MCF 10A (cell line): ENCODE measurements at regions of chrX and their contacts with region 1.

Region 1: DNA sequence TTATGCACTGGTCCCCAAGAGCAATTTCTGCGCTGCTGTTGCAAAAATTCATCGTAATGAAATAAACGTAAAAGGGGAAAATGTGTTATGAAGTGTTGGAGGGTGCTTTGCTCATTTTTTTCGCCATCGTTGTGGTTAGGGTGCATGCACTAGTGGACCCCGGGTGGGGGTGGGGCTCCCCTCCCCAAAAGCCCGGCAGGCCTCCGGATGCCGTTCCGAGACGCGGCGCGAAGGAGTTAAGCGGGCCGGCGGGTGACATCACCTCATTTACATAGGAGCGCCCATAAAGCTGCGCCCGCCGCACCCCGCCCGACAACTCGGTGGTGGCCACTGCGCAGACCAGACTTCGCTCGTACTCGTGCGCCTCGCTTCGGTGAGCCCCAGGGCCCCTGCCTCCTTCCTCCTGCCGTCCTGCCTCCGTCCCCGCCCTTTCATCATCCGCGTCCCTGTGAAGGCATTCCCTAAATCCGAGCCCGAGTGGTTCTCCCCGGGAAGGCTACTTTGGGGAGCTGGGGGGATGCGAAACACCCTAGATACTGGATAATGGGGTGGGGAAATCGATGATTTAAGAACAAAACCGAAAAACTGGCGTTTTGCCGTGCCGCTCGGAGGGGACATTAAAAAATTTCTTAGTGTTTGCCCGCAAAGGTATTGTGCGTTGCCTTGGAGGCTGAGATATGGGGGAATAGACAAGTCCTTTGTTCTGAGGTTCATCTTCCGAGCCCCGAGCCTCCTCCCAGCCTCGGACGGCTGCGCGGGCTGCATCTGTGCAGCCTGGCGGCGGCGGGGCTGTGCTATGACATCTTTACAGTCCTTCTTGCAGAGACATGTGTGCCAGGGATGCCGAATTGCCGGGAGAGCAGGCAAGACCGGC is at the start of gene TMSB4X:
- DNase-seq: peak; percentile 75
- H3K4me3 Mint-ChIP-seq: peak within 1 kb of the TSS; percentile 88
- H3K27ac Mint-ChIP-seq: peak within 1 kb of the TSS; percentile 84
- H3K4me1 Mint-ChIP-seq: peaks cover 8% of the 10 kb centered on the region
- H3K27me3 Mint-ChIP-seq: peaks cover 18% of the 10 kb centered on the region
- CTCF ChIP-seq: no peak
- total RNA-seq, gene TMSB4X: 801 and 901 TPM in 2 replicates

Region 2: DNA sequence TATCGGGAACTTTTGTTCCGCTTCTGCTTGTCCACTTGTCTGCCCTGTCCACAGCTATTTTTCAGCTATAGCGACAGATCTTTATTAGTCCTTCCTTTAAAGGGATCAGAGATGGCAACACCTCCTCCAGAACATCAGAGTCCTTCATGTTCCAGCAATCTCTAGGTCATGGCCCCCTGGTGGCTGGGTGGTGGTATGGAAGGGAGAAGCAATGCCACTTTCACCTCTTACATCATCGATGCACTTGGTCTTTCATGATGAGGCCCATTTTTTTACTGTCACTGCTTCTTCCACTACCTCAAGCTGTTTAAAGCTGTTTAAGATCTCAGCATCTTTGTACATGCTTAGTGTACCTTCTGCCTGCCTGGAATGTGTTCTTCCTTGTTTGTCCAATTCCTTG is 1416.1 kb before region 1 on chrX:
- CTCF ChIA-PET with region 1: no interaction called
- POLR2A ChIA-PET with region 1: no interaction called
- intact Hi-C with region 1: no loop called
- DNase-seq: peak; percentile 46
- H3K4me3 Mint-ChIP-seq: no peak overlapping the region
- H3K27ac Mint-ChIP-seq: no peak overlapping the region
- H3K4me1 Mint-ChIP-seq: no peaks in the 10 kb centered on the region
- H3K27me3 Mint-ChIP-seq: peaks cover 34% of the 10 kb centered on the region
- CTCF ChIP-seq: peak; percentile 43

Region 3: DNA sequence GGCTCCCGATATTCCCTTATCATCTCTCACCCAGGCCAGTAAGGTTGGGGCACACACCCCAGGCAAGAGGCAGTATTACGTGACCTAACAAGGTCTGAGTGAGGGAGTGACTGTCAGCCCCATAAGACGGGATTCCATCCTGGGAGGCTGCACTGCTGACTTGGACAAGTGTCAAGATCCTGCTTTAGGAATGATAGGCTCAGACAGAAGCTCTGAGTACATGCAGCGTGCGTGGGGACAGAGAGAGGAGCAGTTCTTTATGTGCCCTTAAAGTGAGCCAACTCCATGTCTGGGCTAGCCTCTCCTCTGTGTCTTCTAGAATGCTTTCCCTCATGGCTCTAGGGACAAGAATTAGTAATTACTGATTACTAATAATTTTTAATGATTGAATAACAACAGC is 326.0 kb before region 1 on chrX:
- CTCF ChIA-PET with region 1: no interaction called
- POLR2A ChIA-PET with region 1: no interaction called
- intact Hi-C with region 1: no loop called
- DNase-seq: no peak
- H3K4me3 Mint-ChIP-seq: no peak overlapping the region
- H3K27ac Mint-ChIP-seq: no peak overlapping the region
- H3K4me1 Mint-ChIP-seq: no peaks in the 10 kb centered on the region
- H3K27me3 Mint-ChIP-seq: peaks cover 14% of the 10 kb centered on the region
- CTCF ChIP-seq: no peak

Region 4: DNA sequence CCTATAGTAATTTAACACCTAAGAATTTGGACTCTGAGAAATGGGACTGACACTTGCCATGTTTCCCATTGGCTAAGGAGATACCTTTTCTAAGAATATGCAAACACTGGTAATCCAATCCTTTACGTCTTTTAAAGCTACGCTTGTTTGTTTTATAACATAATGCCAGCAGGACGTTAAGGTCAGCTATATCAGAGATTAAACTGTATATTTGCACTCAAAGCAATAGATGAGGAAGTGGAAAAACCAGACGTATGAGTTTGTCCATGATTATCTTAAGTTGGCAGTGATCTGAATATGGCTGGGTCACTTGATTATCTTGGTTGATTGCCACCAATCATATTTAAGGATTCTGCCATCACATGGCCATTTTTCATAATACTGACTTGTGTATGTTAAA is 19.2 kb after region 1 on chrX:
- CTCF ChIA-PET with region 1: no interaction called
- POLR2A ChIA-PET with region 1: no interaction called
- intact Hi-C with region 1: no loop called
- DNase-seq: no peak
- H3K4me3 Mint-ChIP-seq: no peak overlapping the region
- H3K27ac Mint-ChIP-seq: no peak overlapping the region
- H3K4me1 Mint-ChIP-seq: no peaks in the 10 kb centered on the region
- H3K27me3 Mint-ChIP-seq: peaks cover 28% of the 10 kb centered on the region
- CTCF ChIP-seq: no peak

Region 5: DNA sequence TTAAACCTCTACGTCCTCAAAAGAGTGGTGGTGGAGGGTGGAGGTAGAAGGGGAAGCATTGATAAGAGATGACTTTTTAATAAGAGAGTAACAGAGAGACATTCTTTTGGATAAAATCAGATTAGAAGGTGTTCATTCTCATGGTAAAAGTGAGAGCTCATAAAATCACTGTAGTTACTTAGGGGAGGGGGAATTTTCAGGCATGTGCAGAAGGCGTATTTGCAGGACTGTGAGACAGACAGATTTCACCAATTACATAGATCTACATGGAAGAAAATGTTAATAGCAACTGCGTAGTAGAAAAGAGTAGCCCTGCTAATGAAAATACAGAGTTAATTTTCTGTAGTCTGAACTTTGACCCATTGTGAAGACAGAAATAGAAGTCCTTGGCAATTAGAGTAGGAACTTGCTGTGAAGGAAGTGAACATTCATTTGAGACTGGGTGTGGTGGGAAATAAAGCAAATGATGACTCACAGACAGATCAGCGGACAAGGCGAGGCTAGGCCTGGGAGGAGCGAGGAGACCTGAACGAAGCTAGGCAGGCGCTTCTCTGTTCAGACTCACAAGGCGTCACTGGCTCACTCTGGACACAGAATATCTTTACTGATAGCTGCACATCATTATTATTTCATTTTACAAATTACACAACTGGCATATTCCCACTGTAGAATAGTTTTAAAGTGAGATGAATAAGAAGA is 126.6 kb after region 1 on chrX:
- CTCF ChIA-PET with region 1: no interaction called
- POLR2A ChIA-PET with region 1: no interaction called
- intact Hi-C with region 1: loop called (anchors 2 kb)
- DNase-seq: peak; percentile 96
- H3K4me3 Mint-ChIP-seq: peak overlapping the region; percentile 11
- H3K27ac Mint-ChIP-seq: peak overlapping the region; percentile 81
- H3K4me1 Mint-ChIP-seq: peaks cover 32% of the 10 kb centered on the region
- H3K27me3 Mint-ChIP-seq: peaks cover 11% of the 10 kb centered on the region
- CTCF ChIP-seq: no peak

Region 6: GRCh38 chrX:13223868-13224555 is 249.0 kb after region 1 on chrX:
- CTCF ChIA-PET with region 1: interaction called, 3 read pairs
- POLR2A ChIA-PET with region 1: interaction called, 4 read pairs
- intact Hi-C with region 1: loop called (anchors 5 kb)
- DNase-seq: peak; percentile 95
- H3K4me3 Mint-ChIP-seq: no peak overlapping the region
- H3K27ac Mint-ChIP-seq: peak overlapping the region; percentile 67
- H3K4me1 Mint-ChIP-seq: peaks cover 16% of the 10 kb centered on the region
- H3K27me3 Mint-ChIP-seq: peaks cover 20% of the 10 kb centered on the region
- CTCF ChIP-seq: no peak